B cell (primary cell): ENCODE measurements at regions of chr2 and their contacts with region 1.

Region 1: GRCh38 chr2:12716282-12717190 is at the start of gene TRIB2:
- DNase-seq: peak; percentile 94
- ATAC-seq: peak; percentile 83
- H3K4me3 ChIP-seq: peak within 1 kb of the TSS; percentile 79 to 99 (median 93)
- H3K4me3 Mint-ChIP-seq: peak within 1 kb of the TSS; percentile 93
- H3K27ac ChIP-seq: peak within 1 kb of the TSS; percentile 79 to 89
- H3K27ac Mint-ChIP-seq: peak within 1 kb of the TSS; percentile 92
- H3K4me1 ChIP-seq: peaks cover 31 to 36% of the 10 kb centered on the region in 2 donors
- H3K4me1 Mint-ChIP-seq: peaks cover 47% of the 10 kb centered on the region
- H3K27me3 ChIP-seq: no peaks in the 10 kb centered on the region
- H3K27me3 Mint-ChIP-seq: no peaks in the 10 kb centered on the region
- CTCF ChIP-seq: peak; percentile 63
- total RNA-seq, gene TRIB2: 35.0 and 36.3 TPM in 2 replicates

Region 2: GRCh38 chr2:11743846-11744553 is 972.5 kb before region 1 on chr2:
- CTCF ChIA-PET with region 1: interaction called, 3 read pairs
- POLR2A ChIA-PET with region 1: interaction called, 3 read pairs
- intact Hi-C with region 1: loop called (anchors 2 kb)
- DNase-seq: peak; percentile 72
- ATAC-seq: peak; percentile 43
- H3K4me3 ChIP-seq: peak overlapping the region in 2 of 5 experiments; percentile 3 to 17
- H3K4me3 Mint-ChIP-seq: peak overlapping the region; percentile 63
- H3K27ac ChIP-seq: no peak overlapping the region
- H3K27ac Mint-ChIP-seq: peak overlapping the region; percentile 85
- H3K4me1 ChIP-seq: peaks cover 37 to 52% of the 10 kb centered on the region in 2 donors
- H3K4me1 Mint-ChIP-seq: peaks cover 49% of the 10 kb centered on the region
- H3K27me3 ChIP-seq: no peaks in the 10 kb centered on the region
- H3K27me3 Mint-ChIP-seq: no peaks in the 10 kb centered on the region
- CTCF ChIP-seq: no peak

Region 3: GRCh38 chr2:12032398-12032797 is 684.1 kb before region 1 on chr2:
- CTCF ChIA-PET with region 1: interaction called, 12 read pairs
- POLR2A ChIA-PET with region 1: interaction called, 4 read pairs
- intact Hi-C with region 1: loop called (anchors 1 kb)
- DNase-seq: peak; percentile 86
- ATAC-seq: peak; percentile 77
- H3K4me3 ChIP-seq: peak overlapping the region in 2 of 5 experiments; percentile 7 to 39
- H3K4me3 Mint-ChIP-seq: peak overlapping the region; percentile 83
- H3K27ac ChIP-seq: peak overlapping the region; percentile 66 to 81
- H3K27ac Mint-ChIP-seq: peak overlapping the region; percentile 92
- H3K4me1 ChIP-seq: peaks cover 61 to 64% of the 10 kb centered on the region in 2 donors
- H3K4me1 Mint-ChIP-seq: peaks cover 66% of the 10 kb centered on the region
- H3K27me3 ChIP-seq: no peaks in the 10 kb centered on the region
- H3K27me3 Mint-ChIP-seq: no peaks in the 10 kb centered on the region
- CTCF ChIP-seq: peak; percentile 39

Region 4: GRCh38 chr2:12433628-12433994 is 282.9 kb before region 1 on chr2:
- CTCF ChIA-PET with region 1: interaction called, 10 read pairs
- POLR2A ChIA-PET with region 1: no interaction called
- intact Hi-C with region 1: no loop called
- DNase-seq: no peak
- ATAC-seq: no peak
- H3K4me3 ChIP-seq: no peak overlapping the region
- H3K4me3 Mint-ChIP-seq: no peak overlapping the region
- H3K27ac ChIP-seq: no peak overlapping the region
- H3K27ac Mint-ChIP-seq: no peak overlapping the region
- H3K4me1 ChIP-seq: peaks cover 11% of the 10 kb centered on the region in 2 donors
- H3K4me1 Mint-ChIP-seq: peaks cover 17% of the 10 kb centered on the region
- H3K27me3 ChIP-seq: no peaks in the 10 kb centered on the region
- H3K27me3 Mint-ChIP-seq: no peaks in the 10 kb centered on the region
- CTCF ChIP-seq: no peak

Region 5: GRCh38 chr2:12587729-12588522 is 128.6 kb before region 1 on chr2:
- CTCF ChIA-PET with region 1: no interaction called
- POLR2A ChIA-PET with region 1: no interaction called
- intact Hi-C with region 1: loop called (anchors 5 kb)
- DNase-seq: peak; percentile 86
- ATAC-seq: peak; percentile 94
- H3K4me3 ChIP-seq: peak overlapping the region in 1 of 5 experiments; percentile 34
- H3K4me3 Mint-ChIP-seq: peak overlapping the region; percentile 46
- H3K27ac ChIP-seq: no peak overlapping the region
- H3K27ac Mint-ChIP-seq: peak overlapping the region; percentile 75
- H3K4me1 ChIP-seq: peaks cover 39 to 41% of the 10 kb centered on the region in 2 donors
- H3K4me1 Mint-ChIP-seq: peaks cover 46% of the 10 kb centered on the region
- H3K27me3 ChIP-seq: no peaks in the 10 kb centered on the region
- H3K27me3 Mint-ChIP-seq: no peaks in the 10 kb centered on the region
- CTCF ChIP-seq: no peak

Region 6: GRCh38 chr2:13006829-13007717 is 290.5 kb after region 1 on chr2:
- CTCF ChIA-PET with region 1: interaction called, 25 read pairs
- POLR2A ChIA-PET with region 1: no interaction called
- intact Hi-C with region 1: loop called (anchors 2 kb)
- DNase-seq: peak; percentile 77
- ATAC-seq: peak; percentile 49
- H3K4me3 ChIP-seq: no peak overlapping the region
- H3K4me3 Mint-ChIP-seq: no peak overlapping the region
- H3K27ac ChIP-seq: no peak overlapping the region
- H3K27ac Mint-ChIP-seq: no peak overlapping the region
- H3K4me1 ChIP-seq: peaks cover 0 to 3% of the 10 kb centered on the region in 2 donors
- H3K4me1 Mint-ChIP-seq: peaks cover 2% of the 10 kb centered on the region
- H3K27me3 ChIP-seq: no peaks in the 10 kb centered on the region
- H3K27me3 Mint-ChIP-seq: peaks cover 21% of the 10 kb centered on the region
- CTCF ChIP-seq: peak; percentile 96